ENCODE measurements at regions of chr14 and their contacts with region 1.

Region 1: DNA sequence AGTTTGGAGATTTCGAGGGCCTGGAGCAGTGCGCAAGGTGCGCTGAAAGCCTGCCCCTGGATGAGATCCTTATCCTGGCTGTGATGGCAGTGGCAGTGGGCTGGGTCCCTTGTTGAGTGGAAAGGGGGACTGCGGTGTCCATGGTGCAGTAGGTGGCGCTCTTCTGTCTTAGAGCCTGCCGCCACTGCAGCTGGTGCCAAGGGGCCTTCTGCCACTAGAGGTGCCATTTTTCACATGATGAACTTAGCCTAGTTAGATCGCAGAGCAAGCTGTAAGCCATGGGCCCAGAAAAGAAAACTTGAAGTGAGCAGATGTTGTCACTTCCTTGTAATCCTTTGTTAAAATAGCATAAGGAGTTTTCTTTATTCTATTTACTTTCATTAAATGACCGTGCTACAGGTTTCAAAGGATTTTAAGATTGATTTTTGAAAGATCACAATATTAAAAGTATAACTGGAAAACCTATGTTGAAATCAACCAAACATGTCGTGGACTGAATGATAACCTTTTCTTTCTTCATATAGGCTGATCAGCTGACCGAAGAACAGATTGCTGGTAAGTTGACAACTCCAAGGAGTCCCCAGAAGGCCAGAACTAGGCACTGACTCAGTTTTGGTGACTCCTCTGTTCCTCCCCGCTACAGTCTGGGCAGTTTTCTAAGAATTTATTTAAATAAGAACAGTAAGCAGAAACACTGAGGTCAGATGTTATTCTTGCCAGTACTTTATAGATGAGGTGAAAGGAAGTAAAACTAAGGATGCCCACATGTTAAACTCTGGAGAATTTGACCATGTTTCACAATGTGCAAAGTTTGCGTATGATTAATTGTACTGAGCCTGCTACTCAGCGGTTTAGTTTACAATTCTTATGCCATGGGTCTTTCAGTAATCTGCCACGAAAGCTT is 3.0 kb downstream of the CALM1 start:
- DNase-seq: peak; percentile 93 to 98
- H3K4me3 ChIP-seq: peak overlapping the region; percentile 91 to 99 (median 97)
- H3K27ac ChIP-seq: peak overlapping the region; percentile 50 to 98 (median 90)
- H3K4me1 ChIP-seq: peaks cover 31 to 74% (median 52%) of the 10 kb centered on the region in 4 donors
- H3K27me3 ChIP-seq: no peaks in the 10 kb centered on the region
- CTCF ChIP-seq: peak in 6 of 7 experiments; percentile 79 to 99 (median 98)
- EP300 ChIP-seq: no peak
- POLR2A ChIP-seq: no peak

Region 2: GRCh38 chr14:90518941-90519256 is 119.1 kb after region 1 on chr14:
- intact Hi-C with region 1: loop called (anchors 5 kb)
- DNase-seq: peak; percentile 51 to 66
- H3K4me3 ChIP-seq: no peak overlapping the region
- H3K27ac ChIP-seq: peak overlapping the region in 4 of 5 donors; percentile 74 to 86 (median 79)
- H3K4me1 ChIP-seq: peaks cover 51 to 91% (median 66%) of the 10 kb centered on the region in 4 donors
- H3K27me3 ChIP-seq: no peaks in the 10 kb centered on the region
- CTCF ChIP-seq: peak in 4 of 7 experiments; percentile 45 to 78 (median 53)
- EP300 ChIP-seq: no peak
- POLR2A ChIP-seq: no peak

Region 3: GRCh38 chr14:90697577-90698206 is 297.9 kb after region 1 on chr14:
- intact Hi-C with region 1: loop called (anchors 10 kb)
- DNase-seq: peak; percentile 83 to 93
- H3K4me3 ChIP-seq: no peak overlapping the region
- H3K27ac ChIP-seq: peak overlapping the region in 4 of 5 donors; percentile 62 to 82 (median 71)
- H3K4me1 ChIP-seq: peaks cover 0 to 46% (median 29%) of the 10 kb centered on the region in 4 donors
- H3K27me3 ChIP-seq: no peaks in the 10 kb centered on the region
- CTCF ChIP-seq: peak in 5 of 7 experiments; percentile 91 to 94 (median 93)
- EP300 ChIP-seq: no peak
- POLR2A ChIP-seq: no peak

Measured in stomach (tissue), 19 donors.